ENCODE measurements at regions of chr2 and their contacts with region 1.

Region 1: GRCh38 chr2:126657636-126658318 is 1.8 kb downstream of the GYPC start:
- DNase-seq: peak; percentile 99
- ATAC-seq: peak; percentile 75
- H3K4me3 ChIP-seq: no peak overlapping the region
- H3K27ac ChIP-seq: peak overlapping the region; percentile 91
- H3K4me1 ChIP-seq: peaks cover 19% of the 10 kb centered on the region
- H3K27me3 ChIP-seq: no peaks in the 10 kb centered on the region
- CTCF ChIP-seq: no peak; the same call in 1 of the 2 replicates
- POLR2A ChIP-seq: no peak; the same call in 1 of the 2 replicates
- RAD21 ChIP-seq: peak; percentile 1; the same call in 1 of the 2 replicates

Region 2: GRCh38 chr2:126389446-126389845 is 268.3 kb before region 1 on chr2:
- CTCF ChIA-PET with region 1: no interaction called
- POLR2A ChIA-PET with region 1: no interaction called
- dilution Hi-C with region 1: no loop called
- in situ Hi-C with region 1: no loop called
- intact Hi-C with region 1: no loop called
- DNase-seq: no peak
- ATAC-seq: no peak
- H3K4me3 ChIP-seq: no peak overlapping the region
- H3K27ac ChIP-seq: no peak overlapping the region
- H3K4me1 ChIP-seq: no peaks in the 10 kb centered on the region
- H3K27me3 ChIP-seq: no peaks in the 10 kb centered on the region
- CTCF ChIP-seq: no peak
- POLR2A ChIP-seq: no peak
- RAD21 ChIP-seq: no peak

Region 3: DNA sequence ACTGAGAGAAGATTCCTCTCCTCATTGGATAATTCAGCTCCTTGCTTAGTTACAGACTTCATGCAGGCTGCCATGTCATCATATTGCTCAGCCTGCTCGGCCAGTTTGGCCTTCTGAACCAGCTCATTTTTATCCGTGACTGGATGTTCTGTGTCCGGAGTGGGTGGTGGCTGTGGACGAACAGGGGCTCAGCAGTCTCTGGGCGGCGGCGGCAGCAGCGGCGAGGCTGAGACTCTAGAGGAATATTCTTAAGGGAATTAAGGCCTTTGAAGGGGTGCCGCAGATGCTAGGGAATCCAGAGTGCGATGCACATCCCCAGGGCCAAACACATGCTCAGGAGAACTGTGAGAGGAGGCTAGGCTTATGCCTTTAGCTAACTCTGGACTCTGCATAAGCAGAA is 99.7 kb before region 1 on chr2:
- CTCF ChIA-PET with region 1: no interaction called
- POLR2A ChIA-PET with region 1: no interaction called
- dilution Hi-C with region 1: no loop called
- in situ Hi-C with region 1: no loop called
- intact Hi-C with region 1: no loop called
- DNase-seq: no peak
- ATAC-seq: no peak
- H3K4me3 ChIP-seq: no peak overlapping the region
- H3K27ac ChIP-seq: no peak overlapping the region
- H3K4me1 ChIP-seq: no peaks in the 10 kb centered on the region
- H3K27me3 ChIP-seq: no peaks in the 10 kb centered on the region
- CTCF ChIP-seq: no peak
- POLR2A ChIP-seq: no peak
- RAD21 ChIP-seq: no peak

Region 4: GRCh38 chr2:126614524-126615227 is 43.1 kb before region 1 on chr2:
- CTCF ChIA-PET with region 1: no interaction called
- POLR2A ChIA-PET with region 1: no interaction called
- dilution Hi-C with region 1: no loop called
- in situ Hi-C with region 1: no loop called
- intact Hi-C with region 1: loop called (anchors 1 kb)
- DNase-seq: peak; percentile 25
- ATAC-seq: peak; percentile 78
- H3K4me3 ChIP-seq: no peak overlapping the region
- H3K27ac ChIP-seq: no peak overlapping the region
- H3K4me1 ChIP-seq: no peaks in the 10 kb centered on the region
- H3K27me3 ChIP-seq: no peaks in the 10 kb centered on the region
- CTCF ChIP-seq: no peak
- POLR2A ChIP-seq: no peak
- RAD21 ChIP-seq: no peak

Region 5: GRCh38 chr2:126699716-126700581 is 42.2 kb after region 1 on chr2:
- CTCF ChIA-PET with region 1: no interaction called
- POLR2A ChIA-PET with region 1: no interaction called
- dilution Hi-C with region 1: no loop called
- in situ Hi-C with region 1: no loop called
- intact Hi-C with region 1: loop called (anchors 2 kb)
- DNase-seq: peak; percentile 42
- ATAC-seq: peak; percentile 40
- H3K4me3 ChIP-seq: no peak overlapping the region
- H3K27ac ChIP-seq: no peak overlapping the region
- H3K4me1 ChIP-seq: peaks cover 4% of the 10 kb centered on the region; the same call in 1 of the 2 replicates
- H3K27me3 ChIP-seq: no peaks in the 10 kb centered on the region
- CTCF ChIP-seq: no peak
- POLR2A ChIP-seq: no peak
- RAD21 ChIP-seq: no peak

Region 6: GRCh38 chr2:127025359-127026166 is 367.8 kb after region 1 on chr2:
- CTCF ChIA-PET with region 1: no interaction called
- POLR2A ChIA-PET with region 1: no interaction called
- dilution Hi-C with region 1: no loop called
- in situ Hi-C with region 1: no loop called
- intact Hi-C with region 1: loop called (anchors 10 kb)
- DNase-seq: peak; percentile 89
- ATAC-seq: peak; percentile 95
- H3K4me3 ChIP-seq: peak overlapping the region; percentile 36
- H3K27ac ChIP-seq: no peak overlapping the region; the same call in 1 of the 2 replicates
- H3K4me1 ChIP-seq: peaks cover 5% of the 10 kb centered on the region; the same call in 1 of the 2 replicates
- H3K27me3 ChIP-seq: peaks cover 2% of the 10 kb centered on the region
- CTCF ChIP-seq: peak; percentile 38
- POLR2A ChIP-seq: peak; percentile 49; the same call in 1 of the 2 replicates
- RAD21 ChIP-seq: no peak

Region 7: GRCh38 chr2:127049927-127050802 is 392.4 kb after region 1 on chr2:
- CTCF ChIA-PET with region 1: no interaction called
- POLR2A ChIA-PET with region 1: no interaction called
- dilution Hi-C with region 1: no loop called
- in situ Hi-C with region 1: no loop called
- intact Hi-C with region 1: loop called (anchors 10 kb)
- DNase-seq: peak; percentile 41
- ATAC-seq: peak; percentile 93
- H3K4me3 ChIP-seq: no peak overlapping the region
- H3K27ac ChIP-seq: no peak overlapping the region
- H3K4me1 ChIP-seq: peaks cover 2% of the 10 kb centered on the region; the same call in 1 of the 2 replicates
- H3K27me3 ChIP-seq: no peaks in the 10 kb centered on the region
- CTCF ChIP-seq: peak; percentile 85
- POLR2A ChIP-seq: no peak
- RAD21 ChIP-seq: peak; percentile 89

Measured in IMR-90 (cell line).